Activated naive CD4-positive, alpha-beta T cell treated with anti-CD3 and anti-CD28 coated beads, Interleukin-2, amount 10 ng/mL, durations not matched to agents 7 days and 5 days (primary cell): ENCODE measurements at regions of chr15 and their contacts with region 1.

Region 1: GRCh38 chr15:91706322-91707032 is 147.0 kb upstream of the SLCO3A1 start:
- DNase-seq: peak; percentile 97
- H3K4me3 Mint-ChIP-seq: no peak overlapping the region
- H3K27ac Mint-ChIP-seq: peak overlapping the region; percentile 89
- H3K4me1 Mint-ChIP-seq: peaks cover 42% of the 10 kb centered on the region
- H3K27me3 Mint-ChIP-seq: peaks cover 18% of the 10 kb centered on the region

Region 2: DNA sequence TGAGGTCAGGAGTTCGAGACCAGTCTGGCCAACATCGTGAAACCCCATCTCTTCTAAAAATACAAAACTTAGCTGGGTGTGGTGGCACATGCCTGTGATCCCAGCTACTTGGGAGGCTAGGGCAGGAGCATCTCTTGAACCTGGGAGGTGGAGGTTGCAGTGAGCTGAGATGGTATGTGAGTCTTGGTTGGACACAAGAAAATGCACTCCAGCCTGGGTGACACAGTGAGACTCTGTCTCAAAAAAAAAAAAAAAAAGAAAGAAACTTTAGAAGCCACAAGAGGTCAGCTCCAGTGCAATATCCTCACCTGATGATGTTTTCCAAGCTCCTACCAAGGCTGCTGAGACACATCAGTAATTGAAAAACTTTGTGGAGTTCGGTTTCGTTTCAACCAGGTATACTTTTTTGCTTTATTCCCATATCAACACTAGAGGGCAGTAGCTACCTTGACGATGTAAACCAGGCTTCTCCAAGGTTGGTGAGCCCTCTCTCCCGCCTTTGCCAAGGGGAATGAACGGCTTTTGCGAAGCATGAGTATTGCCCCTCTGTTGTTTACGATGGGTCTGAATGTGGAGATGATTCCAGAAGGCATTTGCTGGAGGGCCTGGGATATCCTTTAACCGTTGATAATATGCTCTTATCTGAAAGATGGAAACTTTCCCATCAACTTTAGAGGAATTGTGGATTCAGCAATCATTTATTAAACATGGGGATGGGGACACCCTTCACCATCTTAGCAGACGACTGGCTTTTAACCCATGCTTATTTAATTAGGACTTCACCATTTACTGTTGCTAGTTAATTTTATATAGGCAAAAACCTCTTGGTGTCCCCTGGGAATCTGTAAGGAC is 403.7 kb before region 1 on chr15:
- CTCF ChIA-PET with region 1: interaction called, 21 read pairs
- DNase-seq: peak; percentile 52
- H3K4me3 Mint-ChIP-seq: no peak overlapping the region
- H3K27ac Mint-ChIP-seq: peak overlapping the region; percentile 66
- H3K4me1 Mint-ChIP-seq: peaks cover 66% of the 10 kb centered on the region
- H3K27me3 Mint-ChIP-seq: peaks cover 44% of the 10 kb centered on the region

Region 3: GRCh38 chr15:91611561-91612323 is 94.7 kb before region 1 on chr15:
- CTCF ChIA-PET with region 1: no interaction called
- DNase-seq: no peak
- H3K4me3 Mint-ChIP-seq: no peak overlapping the region
- H3K27ac Mint-ChIP-seq: no peak overlapping the region
- H3K4me1 Mint-ChIP-seq: no peaks in the 10 kb centered on the region
- H3K27me3 Mint-ChIP-seq: peaks cover 11% of the 10 kb centered on the region

Region 4: DNA sequence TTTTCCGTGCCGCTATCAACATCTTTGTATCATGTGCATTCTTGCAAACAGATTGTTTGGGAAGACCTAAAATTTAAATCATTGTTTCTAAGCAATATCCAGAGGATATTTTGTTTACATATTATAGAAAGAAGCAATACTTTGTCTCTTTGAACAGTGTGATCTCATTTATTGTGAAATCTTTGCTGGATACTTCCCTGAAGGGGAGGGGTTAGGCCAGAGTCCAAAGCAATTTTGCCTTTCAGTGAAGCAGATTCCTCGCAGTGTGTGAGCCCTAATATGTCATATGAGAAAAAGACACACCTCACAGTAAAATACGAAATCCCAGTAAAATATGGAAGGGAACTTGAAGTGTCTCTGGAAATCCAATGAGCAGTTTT is 11.7 kb before region 1 on chr15:
- CTCF ChIA-PET with region 1: interaction called, 14 read pairs
- DNase-seq: no peak
- H3K4me3 Mint-ChIP-seq: no peak overlapping the region
- H3K27ac Mint-ChIP-seq: no peak overlapping the region
- H3K4me1 Mint-ChIP-seq: no peaks in the 10 kb centered on the region
- H3K27me3 Mint-ChIP-seq: peaks cover 20% of the 10 kb centered on the region

Region 5: DNA sequence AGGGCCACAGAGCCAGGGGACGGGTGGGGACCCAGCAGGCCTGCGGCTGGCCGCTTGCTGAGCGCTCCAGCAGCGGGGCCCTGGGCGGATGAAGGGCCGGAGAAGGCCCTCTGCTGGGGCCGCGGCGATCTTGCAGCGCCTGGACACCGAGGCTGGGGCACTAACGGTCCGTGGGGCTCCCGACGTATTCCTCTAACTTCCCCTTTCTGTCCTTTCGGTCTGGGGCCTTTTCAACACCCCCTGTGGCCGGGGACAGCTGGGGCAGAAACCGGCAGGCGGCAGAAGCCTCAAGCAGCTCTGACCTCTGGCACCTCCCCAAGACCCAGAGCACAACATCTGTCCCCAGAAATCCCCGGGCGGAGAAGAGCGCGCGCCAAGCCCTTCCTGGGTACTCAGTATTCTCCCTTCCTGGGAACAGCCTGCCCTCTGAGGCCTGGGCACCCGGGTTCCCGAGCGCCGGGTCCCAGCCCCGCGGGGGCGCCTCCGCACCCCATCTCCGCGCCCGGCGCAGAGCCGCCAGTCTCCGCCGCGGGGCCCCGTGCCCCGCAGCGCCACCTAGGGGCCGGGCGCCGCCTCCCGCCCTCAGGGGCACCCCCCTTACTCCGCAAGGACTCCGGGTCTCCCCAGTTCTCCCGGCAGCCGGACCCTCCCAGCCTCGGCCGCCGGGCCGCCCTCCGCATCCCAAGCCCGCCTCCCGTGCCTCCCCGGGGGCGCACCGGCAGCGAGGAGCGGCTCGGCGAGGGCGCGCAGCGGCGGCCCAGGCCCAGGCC is 146.4 kb after region 1 on chr15:
- CTCF ChIA-PET with region 1: interaction called, 16 read pairs
- DNase-seq: peak; percentile 77
- H3K4me3 Mint-ChIP-seq: peak overlapping the region; percentile 88
- H3K27ac Mint-ChIP-seq: peak overlapping the region; percentile 89
- H3K4me1 Mint-ChIP-seq: peaks cover 70% of the 10 kb centered on the region
- H3K27me3 Mint-ChIP-seq: peaks cover 7% of the 10 kb centered on the region

Region 6: GRCh38 chr15:92077353-92078085 is 371.0 kb after region 1 on chr15:
- CTCF ChIA-PET with region 1: interaction called, 36 read pairs
- DNase-seq: peak; percentile 77
- H3K4me3 Mint-ChIP-seq: no peak overlapping the region
- H3K27ac Mint-ChIP-seq: no peak overlapping the region
- H3K4me1 Mint-ChIP-seq: peaks cover 33% of the 10 kb centered on the region
- H3K27me3 Mint-ChIP-seq: no peaks in the 10 kb centered on the region